ENCODE measurements at regions of chr4 and their contacts with region 1.

Region 1: GRCh38 chr4:114857831-114858230 is 255.6 kb downstream of the NDST4 start:
- DNase-seq: no peak
- H3K4me3 ChIP-seq: no peak overlapping the region
- H3K27ac ChIP-seq: no peak overlapping the region
- H3K27me3 ChIP-seq: peaks cover 0 to 4% (median 0%) of the 10 kb centered on the region in 45 donors
- CTCF ChIP-seq: no peak

Region 2: DNA sequence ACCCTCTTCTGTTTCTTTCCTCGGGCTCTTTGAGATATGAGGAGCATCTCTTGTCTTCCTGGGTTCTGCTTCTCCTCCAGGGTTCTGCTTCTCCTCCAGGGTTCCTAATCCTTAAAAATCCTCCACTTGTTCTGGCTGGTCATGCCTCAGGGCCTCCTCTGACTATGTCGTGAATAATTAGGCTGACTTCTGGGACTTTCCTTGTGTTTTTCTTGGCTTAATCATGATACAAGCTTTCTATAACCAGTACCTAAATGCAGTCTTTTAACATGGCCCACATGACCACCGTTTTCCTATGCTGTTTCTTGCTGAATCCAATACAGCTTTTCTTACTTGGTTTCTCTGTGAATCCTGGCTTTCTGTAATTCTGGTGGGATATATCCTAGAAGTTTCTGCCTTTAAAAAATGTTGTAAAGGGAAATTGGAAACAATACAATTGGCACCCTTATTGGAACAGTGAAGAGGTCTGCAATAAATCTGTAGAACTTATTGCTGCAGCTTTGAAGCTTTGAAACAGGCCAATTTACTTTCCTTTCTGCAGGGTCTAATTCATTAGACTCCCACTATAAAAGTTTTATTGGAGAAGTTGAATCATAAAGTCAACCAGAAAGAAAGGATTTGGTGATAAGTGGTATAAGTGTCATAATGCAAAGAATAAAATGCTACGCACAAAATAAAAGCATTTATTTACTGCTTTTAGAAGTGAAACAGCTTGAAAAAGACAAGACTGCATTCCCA is 46.1 kb before region 1 on chr4:
- intact Hi-C with region 1: no loop called
- DNase-seq: no peak
- H3K4me3 ChIP-seq: no peak overlapping the region
- H3K27ac ChIP-seq: no peak overlapping the region
- H3K27me3 ChIP-seq: peaks cover 0 to 4% (median 0%) of the 10 kb centered on the region in 45 donors
- CTCF ChIP-seq: no peak

Region 3: GRCh38 chr4:114997596-114998247 is 139.9 kb after region 1 on chr4:
- intact Hi-C with region 1: loop called in 1 of 2 experiments (anchors 10 kb)
- DNase-seq: no peak
- H3K4me3 ChIP-seq: no peak overlapping the region
- H3K27ac ChIP-seq: no peak overlapping the region
- H3K27me3 ChIP-seq: no peaks in the 10 kb centered on the region
- CTCF ChIP-seq: no peak

Measured in dorsolateral prefrontal cortex (tissue), 120 donors.